Posterior vena cava (tissue), 2 donors: ENCODE measurements at regions of chr1 and their contacts with region 1.

Region 1: GRCh38 chr1:1435106-1435903 is at the start of gene VWA1:
- DNase-seq: peak; percentile 89
- total RNA-seq, gene VWA1: 59.8 to 67.7 TPM

Region 2: GRCh38 chr1:1402081-1402900 is 33.0 kb before region 1 on chr1:
- intact Hi-C with region 1: loop called in 1 of 2 experiments (anchors 5 kb)
- DNase-seq: no peak